T-cell (primary cell): ENCODE measurements at regions of chr11 and their contacts with region 1.

Region 1: GRCh38 chr11:19071255-19071654 is 10.7 kb upstream of the MRGPRX2 start:
- DNase-seq: peak in 31 of 35 experiments; percentile 4 to 78 (median 27)
- ATAC-seq: peak; percentile 73 to 87 (median 81)
- H3K4me3 ChIP-seq: no peak overlapping the region
- H3K4me3 Mint-ChIP-seq: peak overlapping the region in 2 of 3 donors; percentile 12 to 38
- H3K27ac ChIP-seq: no peak overlapping the region
- H3K27ac Mint-ChIP-seq: no peak overlapping the region
- H3K4me1 ChIP-seq: peaks cover 0 to 4% of the 10 kb centered on the region in 2 experiments
- H3K4me1 Mint-ChIP-seq: peaks cover 0 to 8% (median 7%) of the 10 kb centered on the region in 3 donors
- H3K27me3 ChIP-seq: peaks cover 0 to 10% of the 10 kb centered on the region in 2 experiments
- H3K27me3 Mint-ChIP-seq: peaks cover 21 to 27% of the 10 kb centered on the region in 2 donors

Region 2: GRCh38 chr11:18768472-18768901 is 302.8 kb before region 1 on chr11:
- CTCF ChIA-PET with region 1: no interaction called
- POLR2A ChIA-PET with region 1: no interaction called
- DNase-seq: no peak
- ATAC-seq: no peak
- H3K4me3 ChIP-seq: no peak overlapping the region
- H3K4me3 Mint-ChIP-seq: no peak overlapping the region
- H3K27ac ChIP-seq: no peak overlapping the region
- H3K27ac Mint-ChIP-seq: no peak overlapping the region
- H3K4me1 ChIP-seq: no peaks in the 10 kb centered on the region
- H3K4me1 Mint-ChIP-seq: peaks cover 0 to 7% (median 5%) of the 10 kb centered on the region in 3 donors
- H3K27me3 ChIP-seq: peaks cover 0 to 34% of the 10 kb centered on the region in 2 experiments
- H3K27me3 Mint-ChIP-seq: peaks cover 19 to 21% of the 10 kb centered on the region in 2 donors

Region 3: DNA sequence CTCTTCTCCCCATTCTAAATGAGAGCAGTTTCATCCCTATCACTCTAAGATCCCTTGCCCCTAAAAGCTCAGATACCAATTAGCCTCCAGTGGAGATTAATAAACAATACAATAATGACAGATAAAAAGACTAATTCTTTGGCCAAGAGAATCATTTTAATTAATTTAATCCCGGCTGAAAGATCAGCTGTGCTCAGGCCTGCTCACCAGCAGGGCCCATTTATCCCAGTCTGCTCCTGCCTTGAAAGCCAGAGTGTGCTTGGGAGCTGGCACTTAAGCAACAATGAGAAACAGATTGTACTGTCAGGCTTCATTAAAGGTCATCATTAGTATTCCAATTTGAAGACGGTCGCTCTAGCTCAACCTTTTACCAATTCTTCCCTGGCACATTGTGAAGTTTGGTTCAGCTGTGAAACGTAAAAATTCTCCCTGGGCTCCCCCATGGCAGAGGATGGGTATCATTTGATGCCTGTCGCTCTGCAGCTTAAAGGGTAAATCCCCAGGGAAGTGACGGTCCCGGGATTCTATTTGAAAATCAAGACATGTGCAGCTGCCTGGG is 1256.2 kb after region 1 on chr11:
- CTCF ChIA-PET with region 1: interaction called in 1 of 2 experiments, 11 read pairs
- POLR2A ChIA-PET with region 1: no interaction called
- DNase-seq: no peak
- ATAC-seq: no peak
- H3K4me3 ChIP-seq: no peak overlapping the region
- H3K4me3 Mint-ChIP-seq: no peak overlapping the region
- H3K27ac ChIP-seq: no peak overlapping the region
- H3K27ac Mint-ChIP-seq: no peak overlapping the region
- H3K4me1 ChIP-seq: no peaks in the 10 kb centered on the region
- H3K4me1 Mint-ChIP-seq: no peaks in the 10 kb centered on the region
- H3K27me3 ChIP-seq: no peaks in the 10 kb centered on the region
- H3K27me3 Mint-ChIP-seq: peaks cover 18 to 22% of the 10 kb centered on the region in 2 donors

Region 4: DNA sequence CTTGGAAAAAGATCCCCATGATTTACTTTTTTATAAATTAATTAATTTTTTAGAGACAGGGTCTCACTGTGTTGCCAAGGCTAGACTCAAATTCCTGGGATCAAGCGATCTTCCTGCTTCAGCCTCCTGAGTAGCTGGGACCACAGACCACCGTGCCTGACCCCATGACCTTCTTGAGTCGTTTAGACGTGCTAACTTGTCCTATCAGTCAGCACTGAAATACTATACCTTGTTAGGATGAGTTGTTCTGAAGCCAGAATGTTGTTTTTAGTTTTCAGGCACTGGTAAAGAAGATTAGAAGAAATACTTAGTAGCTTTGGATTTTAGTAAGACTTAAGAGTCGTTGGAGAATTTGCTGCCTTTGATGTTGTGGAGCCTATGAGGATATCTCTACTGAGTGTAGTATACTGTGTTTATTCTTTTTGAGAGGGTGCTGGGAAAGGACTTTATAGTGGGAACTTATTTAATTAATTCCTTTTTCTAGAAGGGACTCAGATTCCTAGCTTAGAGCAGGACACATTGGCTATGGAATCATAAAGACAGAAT is 1300.9 kb after region 1 on chr11:
- CTCF ChIA-PET with region 1: no interaction called
- POLR2A ChIA-PET with region 1: interaction called in 1 of 2 experiments, 11 read pairs
- DNase-seq: no peak
- ATAC-seq: no peak
- H3K4me3 ChIP-seq: no peak overlapping the region
- H3K4me3 Mint-ChIP-seq: no peak overlapping the region
- H3K27ac ChIP-seq: no peak overlapping the region
- H3K27ac Mint-ChIP-seq: no peak overlapping the region
- H3K4me1 ChIP-seq: no peaks in the 10 kb centered on the region
- H3K4me1 Mint-ChIP-seq: peaks cover 10 to 36% (median 35%) of the 10 kb centered on the region in 3 donors
- H3K27me3 ChIP-seq: no peaks in the 10 kb centered on the region
- H3K27me3 Mint-ChIP-seq: no peaks in the 10 kb centered on the region